ENCODE measurements at regions of chr7 and their contacts with region 1.

Region 1: GRCh38 chr7:140175221-140176121 is 1.3 kb downstream of the KDM7A start:
- DNase-seq: peak; percentile 97
- H3K4me3 Mint-ChIP-seq: peak overlapping the region; percentile 81
- H3K27ac Mint-ChIP-seq: peak overlapping the region; percentile 89
- H3K4me1 Mint-ChIP-seq: peaks cover 44% of the 10 kb centered on the region
- H3K27me3 Mint-ChIP-seq: no peaks in the 10 kb centered on the region

Region 2: DNA sequence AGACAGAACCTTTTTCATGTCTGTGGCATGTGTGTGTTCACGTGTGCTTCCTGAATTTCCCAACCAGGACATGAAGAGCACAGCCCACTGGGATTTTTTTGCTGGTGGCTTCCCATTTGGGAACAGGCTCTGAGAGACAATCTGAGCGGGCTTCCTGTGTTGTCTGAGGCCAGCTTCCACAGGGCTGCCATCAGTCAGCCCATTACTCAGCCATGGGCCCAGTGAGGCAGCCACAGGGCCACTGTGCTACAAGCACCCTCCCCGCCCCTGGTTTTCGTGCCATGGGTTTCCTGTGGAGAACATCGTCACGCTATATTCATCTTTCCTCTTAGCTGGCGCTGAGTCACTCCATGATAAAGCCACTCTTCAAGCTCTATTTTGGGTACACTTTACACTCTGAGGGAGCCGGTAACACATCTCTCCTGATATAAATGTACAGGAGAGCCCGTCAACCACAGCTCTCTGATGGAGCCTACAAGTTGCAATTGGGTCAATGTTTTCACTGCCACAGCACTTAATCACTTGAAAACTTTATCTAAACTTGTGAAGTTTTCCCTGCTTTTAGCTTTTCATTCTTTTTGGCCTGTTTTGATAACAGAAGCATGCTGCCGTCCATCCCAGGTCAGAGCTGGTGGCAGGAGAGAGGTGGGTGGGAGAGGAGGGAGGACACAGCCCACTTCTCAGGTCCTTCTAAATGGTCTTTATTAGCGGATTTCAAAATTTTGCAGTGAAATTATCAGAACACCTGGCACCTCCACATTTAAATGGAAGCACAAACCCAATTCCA is 494.6 kb before region 1 on chr7:
- CTCF ChIA-PET with region 1: no interaction called
- intact Hi-C with region 1: loop called (anchors 5 kb)
- DNase-seq: peak; percentile 91
- H3K4me3 Mint-ChIP-seq: no peak overlapping the region
- H3K27ac Mint-ChIP-seq: peak overlapping the region; percentile 88
- H3K4me1 Mint-ChIP-seq: peaks cover 45% of the 10 kb centered on the region
- H3K27me3 Mint-ChIP-seq: no peaks in the 10 kb centered on the region

Region 3: GRCh38 chr7:139714163-139714901 is 461.1 kb before region 1 on chr7:
- CTCF ChIA-PET with region 1: no interaction called
- intact Hi-C with region 1: no loop called
- DNase-seq: no peak
- H3K4me3 Mint-ChIP-seq: no peak overlapping the region
- H3K27ac Mint-ChIP-seq: no peak overlapping the region
- H3K4me1 Mint-ChIP-seq: no peaks in the 10 kb centered on the region
- H3K27me3 Mint-ChIP-seq: no peaks in the 10 kb centered on the region

Region 4: DNA sequence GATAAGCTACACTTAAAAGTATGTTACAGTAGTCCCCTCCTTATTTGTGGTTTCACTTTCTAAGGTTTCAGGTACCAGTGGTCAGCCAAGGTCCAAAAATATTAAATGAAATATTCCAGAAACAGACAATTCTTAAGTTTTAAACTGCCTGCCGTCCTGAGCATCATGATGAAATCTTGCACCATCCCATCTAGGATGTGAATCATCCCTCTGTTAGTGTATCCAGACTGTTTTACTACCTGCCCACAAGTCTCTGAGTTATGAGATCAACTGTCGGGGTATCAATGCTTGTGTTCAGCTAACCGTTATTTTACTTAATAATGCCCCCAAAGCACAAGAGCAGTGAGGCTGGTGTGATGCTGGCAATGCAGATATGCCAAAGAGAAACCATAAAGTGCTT is 10.0 kb before region 1 on chr7:
- CTCF ChIA-PET with region 1: interaction called, 9 read pairs
- intact Hi-C with region 1: loop called (anchors 1 kb)
- DNase-seq: peak; percentile 42
- H3K4me3 Mint-ChIP-seq: peak overlapping the region; percentile 39
- H3K27ac Mint-ChIP-seq: peak overlapping the region; percentile 95
- H3K4me1 Mint-ChIP-seq: peaks cover 79% of the 10 kb centered on the region
- H3K27me3 Mint-ChIP-seq: no peaks in the 10 kb centered on the region

Region 5: DNA sequence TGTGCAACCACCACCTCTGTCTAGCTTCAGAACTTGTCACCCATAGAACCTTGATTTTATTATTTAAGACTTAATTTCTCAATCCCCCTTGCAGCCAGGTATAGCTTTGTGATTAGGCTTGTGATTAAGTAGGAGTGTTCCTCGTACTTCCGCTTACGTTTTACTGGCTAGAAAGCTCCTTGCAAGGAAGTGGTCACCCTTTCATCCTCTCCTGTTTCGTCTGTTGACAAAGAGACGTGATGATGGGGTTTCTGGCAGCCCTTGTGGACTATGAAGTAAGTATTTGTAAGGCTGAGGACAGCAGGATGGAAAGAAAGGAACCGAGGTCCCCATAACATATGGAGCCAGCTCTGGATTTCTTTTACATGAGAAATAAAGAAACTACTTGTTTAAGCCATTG is 87.8 kb after region 1 on chr7:
- CTCF ChIA-PET with region 1: interaction called, 3 read pairs
- intact Hi-C with region 1: loop called (anchors 1 kb)
- DNase-seq: peak; percentile 62
- H3K4me3 Mint-ChIP-seq: peak overlapping the region; percentile 26
- H3K27ac Mint-ChIP-seq: peak overlapping the region; percentile 52
- H3K4me1 Mint-ChIP-seq: peaks cover 44% of the 10 kb centered on the region
- H3K27me3 Mint-ChIP-seq: no peaks in the 10 kb centered on the region

Region 6: DNA sequence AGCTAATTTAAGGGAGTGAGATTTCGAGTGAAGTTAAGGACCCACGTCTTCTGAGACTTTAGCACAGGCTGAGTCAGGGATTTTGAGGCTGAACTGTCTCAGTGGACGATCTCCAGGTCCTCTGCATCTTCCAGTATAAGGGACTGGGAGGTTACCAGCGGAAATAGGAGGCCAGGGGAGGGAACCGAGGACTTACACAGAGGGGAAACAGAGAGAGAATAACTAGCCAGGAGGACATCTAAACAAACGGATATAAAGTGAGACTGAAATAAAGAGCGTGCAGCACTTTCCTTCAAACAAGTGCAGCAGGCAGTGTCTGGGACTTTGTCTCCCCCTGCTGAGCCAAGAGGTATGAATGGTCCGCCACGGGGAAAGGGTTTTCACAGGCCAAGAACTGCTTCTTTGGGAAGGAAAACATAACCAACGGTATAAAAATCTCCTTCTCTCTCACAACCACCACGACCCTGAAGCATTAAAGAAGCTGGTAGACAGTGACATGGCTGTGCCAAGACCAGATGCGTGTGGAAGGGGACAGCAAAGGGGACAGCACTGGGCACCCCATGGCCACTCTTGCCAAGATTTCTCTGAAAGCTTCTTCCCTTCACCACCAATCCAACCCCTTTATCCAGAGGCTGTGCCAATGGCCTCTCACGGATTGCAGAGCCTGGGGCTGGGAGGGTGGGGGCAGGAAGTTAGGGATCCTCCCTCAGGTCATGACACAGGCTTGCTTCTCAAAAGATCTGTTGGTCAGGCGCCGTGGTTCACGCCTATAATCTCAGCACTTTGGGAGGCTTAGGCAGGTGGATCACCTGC is 150.9 kb after region 1 on chr7:
- CTCF ChIA-PET with region 1: interaction called, 6 read pairs
- intact Hi-C with region 1: loop called (anchors 1 kb)
- DNase-seq: peak; percentile 76
- H3K4me3 Mint-ChIP-seq: no peak overlapping the region
- H3K27ac Mint-ChIP-seq: no peak overlapping the region
- H3K4me1 Mint-ChIP-seq: no peaks in the 10 kb centered on the region
- H3K27me3 Mint-ChIP-seq: no peaks in the 10 kb centered on the region

Region 7: GRCh38 chr7:140494867-140495266 is 319.4 kb after region 1 on chr7:
- CTCF ChIA-PET with region 1: no interaction called
- intact Hi-C with region 1: loop called (anchors 1 kb)
- DNase-seq: no peak
- H3K4me3 Mint-ChIP-seq: no peak overlapping the region
- H3K27ac Mint-ChIP-seq: no peak overlapping the region
- H3K4me1 Mint-ChIP-seq: no peaks in the 10 kb centered on the region
- H3K27me3 Mint-ChIP-seq: no peaks in the 10 kb centered on the region

Measured in activated naive CD4-positive, alpha-beta T cell treated with anti-CD3 and anti-CD28 coated beads for 36 hours (primary cell).